Head of caudate nucleus (tissue), 42 donors: ENCODE measurements at regions of chr6 and their contacts with region 1.

Region 1: GRCh38 chr6:96897383-96898240 is at the start of gene NDUFAF4:
- DNase-seq: peak; percentile 91 to 98 (median 95)

Region 2: DNA sequence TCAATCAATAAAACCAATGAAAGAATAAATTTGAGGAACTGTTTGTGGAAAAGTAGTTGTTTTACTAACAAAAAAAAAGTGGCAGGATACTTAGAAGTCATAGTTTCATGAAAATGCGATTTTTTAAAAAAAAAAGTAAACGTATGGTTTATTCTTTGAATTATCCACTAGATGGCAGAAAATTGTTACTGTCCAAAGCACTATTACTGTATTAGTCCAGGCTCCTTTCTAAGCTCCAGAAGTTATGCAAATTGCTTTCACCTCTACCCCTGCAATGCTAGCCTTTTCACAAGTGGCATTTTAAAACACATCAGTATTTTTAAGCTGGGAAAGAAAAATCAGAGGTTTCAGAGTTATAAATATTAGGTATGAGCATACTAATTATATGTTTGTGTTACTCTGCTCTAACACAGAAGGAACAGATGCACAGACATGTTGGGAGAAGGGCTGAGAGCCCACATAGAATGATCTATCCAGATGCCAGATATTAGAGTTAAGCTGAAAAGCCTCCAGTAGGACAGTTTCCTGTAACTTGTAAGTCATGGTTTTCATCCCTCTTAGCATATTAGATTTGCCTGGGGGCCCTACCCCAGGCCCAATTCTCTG is 270.8 kb before region 1 on chr6:
- intact Hi-C with region 1: loop called (anchors 5 kb)
- DNase-seq: no peak

Region 3: DNA sequence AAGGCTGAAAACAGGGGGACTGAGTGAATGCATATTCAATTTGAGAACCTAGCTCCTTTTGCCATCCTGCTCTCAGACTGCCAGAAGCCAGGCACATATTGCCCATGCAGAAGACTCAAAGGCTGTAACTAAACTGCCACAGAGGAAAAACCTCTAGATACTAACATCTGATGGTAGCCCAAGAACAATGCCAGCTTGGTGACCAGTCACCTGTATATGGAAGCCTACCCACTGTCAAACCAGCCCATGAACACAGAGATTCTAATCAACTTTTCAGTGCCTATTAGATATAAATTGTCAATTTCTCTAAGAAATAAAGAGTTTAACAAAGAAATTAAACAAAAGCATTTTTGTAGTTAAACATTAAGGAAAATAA is 94.5 kb before region 1 on chr6:
- intact Hi-C with region 1: no loop called
- DNase-seq: no peak

Region 4: GRCh38 chr6:96923871-96924493 is 26.4 kb after region 1 on chr6:
- intact Hi-C with region 1: loop called (anchors 2 kb)
- DNase-seq: peak in 1 of 42 donors; percentile 31

Region 5: GRCh38 chr6:97053643-97054411 is 156.2 kb after region 1 on chr6:
- intact Hi-C with region 1: loop called (anchors 2 kb)
- DNase-seq: no peak